SK-N-SH (cell line): ENCODE measurements at regions of chr17 and their contacts with region 1.

Region 1: DNA sequence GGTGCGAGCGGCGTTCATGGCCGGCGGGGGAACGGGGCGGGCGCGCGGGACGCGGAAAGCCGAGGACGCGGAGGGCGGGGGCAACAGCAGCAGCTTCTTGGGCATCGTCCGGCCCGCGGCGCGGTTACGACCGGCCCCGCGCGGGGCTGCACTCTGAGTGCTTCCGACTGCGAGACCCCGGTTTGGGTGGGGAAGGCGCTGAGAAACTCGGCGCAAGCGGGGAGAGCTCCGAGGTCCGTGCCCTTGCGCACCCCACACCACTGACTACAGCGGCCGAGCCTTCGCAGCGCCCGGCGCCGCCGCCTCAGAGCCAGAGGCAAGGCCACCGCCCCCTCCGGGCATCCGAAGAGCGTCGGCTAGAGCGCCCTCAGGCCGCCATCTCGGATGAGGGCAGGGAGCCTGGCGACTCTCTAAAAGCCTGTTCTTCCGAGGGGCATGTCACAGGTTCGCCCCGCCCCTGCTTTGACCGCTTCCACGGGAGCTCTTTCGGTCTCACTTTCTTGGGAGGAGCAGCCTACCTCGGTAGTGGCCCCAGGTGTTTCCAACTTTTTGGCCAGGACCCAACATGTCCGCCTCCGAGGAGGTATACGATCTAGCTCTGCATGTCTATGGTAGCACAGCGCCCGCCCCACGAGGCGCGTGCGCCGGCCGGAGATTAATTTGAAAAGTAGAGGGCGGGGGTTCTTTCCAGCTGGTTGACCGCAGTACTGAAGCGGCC is at the start of gene PRPSAP1:
- DNase-seq: peak; percentile 97
- H3K4me3 ChIP-seq: peak within 1 kb of the TSS; percentile 65 to 87
- H3K27ac ChIP-seq: peak within 1 kb of the TSS; percentile 83 to 90
- H3K4me1 ChIP-seq: peaks cover 7 to 10% of the 10 kb centered on the region in 2 experiments; a peak in 2 of 4 replicates
- H3K27me3 ChIP-seq: no peaks in the 10 kb centered on the region
- CTCF ChIP-seq: peak; percentile 21
- EP300 ChIP-seq: 0 out of 4 replicates have a peak, but pooled peaks of 1 of the 2 experiments have one; percentile 19
- RAD21 ChIP-seq: no peak
- polyA plus RNA-seq, gene PRPSAP1: 118 and 125 TPM in 2 replicates

Region 2: GRCh38 chr17:76365256-76365903 is 11.6 kb after region 1 on chr17:
- CTCF ChIA-PET with region 1: interaction called, 21 read pairs
- POLR2A ChIA-PET with region 1: interaction called, 11 read pairs
- DNase-seq: no peak
- H3K4me3 ChIP-seq: no peak overlapping the region
- H3K27ac ChIP-seq: no peak overlapping the region
- H3K4me1 ChIP-seq: peaks cover 3 to 23% of the 10 kb centered on the region in 2 experiments; a peak in 2 of 4 replicates
- H3K27me3 ChIP-seq: no peaks in the 10 kb centered on the region
- CTCF ChIP-seq: no peak
- EP300 ChIP-seq: no peak
- RAD21 ChIP-seq: no peak

Region 3: GRCh38 chr17:76370261-76370993 is 16.7 kb after region 1 on chr17:
- CTCF ChIA-PET with region 1: interaction called, 21 read pairs
- POLR2A ChIA-PET with region 1: interaction called, 11 read pairs
- DNase-seq: peak; percentile 65
- H3K4me3 ChIP-seq: no peak overlapping the region
- H3K27ac ChIP-seq: peak overlapping the region in 1 of 2 experiments; percentile 87; a peak in 2 of 4 replicates
- H3K4me1 ChIP-seq: peaks cover 7 to 24% of the 10 kb centered on the region in 2 experiments; a peak in 2 of 4 replicates
- H3K27me3 ChIP-seq: no peaks in the 10 kb centered on the region
- CTCF ChIP-seq: peak; percentile 93
- EP300 ChIP-seq: peak in 1 of 2 experiments; percentile 73; a peak in 1 of 4 replicates
- RAD21 ChIP-seq: no peak; the same call in 1 of the 2 replicates